Activated CD4-positive, alpha-beta T cell treated with anti-CD3 and anti-CD28 coated beads, Interleukin-2, amount 10 ng/mL, durations not matched to agents 24 days and 14 days (primary cell): ENCODE measurements at regions of chr9 and their contacts with region 1.

Region 1: DNA sequence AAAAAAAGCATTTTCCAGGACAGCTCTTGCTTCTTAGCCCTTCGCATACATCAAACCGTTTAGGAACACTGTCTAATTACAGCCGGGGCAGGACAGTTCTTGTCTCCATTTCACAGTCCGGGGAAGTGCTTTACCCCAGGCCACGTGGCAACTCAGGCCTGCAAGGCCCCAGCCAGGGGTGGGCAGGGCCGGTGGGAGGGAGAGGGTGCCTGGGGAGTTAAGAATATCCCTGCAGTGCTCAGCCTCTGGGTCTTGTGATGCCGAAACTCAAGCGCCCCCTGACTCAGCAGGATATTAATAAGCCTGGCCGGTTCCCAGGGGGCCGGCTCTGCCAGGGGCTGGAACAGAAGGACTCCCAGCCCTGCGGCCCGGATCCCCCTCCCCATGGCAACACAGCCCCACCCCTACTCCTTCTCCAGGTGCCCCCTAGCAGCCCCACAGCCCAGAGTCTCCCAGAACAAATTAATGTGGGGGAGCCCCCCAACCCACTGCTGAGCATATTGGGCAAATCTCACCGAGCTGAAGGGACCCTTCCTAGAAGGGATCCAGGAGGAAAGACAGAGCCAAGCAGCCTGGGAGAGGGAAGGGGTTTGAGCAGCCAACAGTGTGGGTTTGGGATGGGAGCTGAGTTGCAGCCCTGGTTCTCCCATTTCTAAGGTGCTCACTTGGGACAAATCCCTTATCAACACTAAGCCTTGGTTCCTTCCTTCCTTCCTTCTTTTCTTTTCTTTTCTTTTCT is 45.3 kb downstream of the PLPP7 start:
- DNase-seq: no peak
- H3K4me3 Mint-ChIP-seq: no peak overlapping the region
- H3K27ac Mint-ChIP-seq: no peak overlapping the region
- H3K4me1 Mint-ChIP-seq: peaks cover 6% of the 10 kb centered on the region
- H3K27me3 Mint-ChIP-seq: peaks cover 1% of the 10 kb centered on the region

Region 2: GRCh38 chr9:131037335-131038255 is 297.2 kb before region 1 on chr9:
- intact Hi-C with region 1: no loop called
- DNase-seq: no peak
- H3K4me3 Mint-ChIP-seq: no peak overlapping the region
- H3K27ac Mint-ChIP-seq: no peak overlapping the region
- H3K4me1 Mint-ChIP-seq: no peaks in the 10 kb centered on the region
- H3K27me3 Mint-ChIP-seq: no peaks in the 10 kb centered on the region

Region 3: DNA sequence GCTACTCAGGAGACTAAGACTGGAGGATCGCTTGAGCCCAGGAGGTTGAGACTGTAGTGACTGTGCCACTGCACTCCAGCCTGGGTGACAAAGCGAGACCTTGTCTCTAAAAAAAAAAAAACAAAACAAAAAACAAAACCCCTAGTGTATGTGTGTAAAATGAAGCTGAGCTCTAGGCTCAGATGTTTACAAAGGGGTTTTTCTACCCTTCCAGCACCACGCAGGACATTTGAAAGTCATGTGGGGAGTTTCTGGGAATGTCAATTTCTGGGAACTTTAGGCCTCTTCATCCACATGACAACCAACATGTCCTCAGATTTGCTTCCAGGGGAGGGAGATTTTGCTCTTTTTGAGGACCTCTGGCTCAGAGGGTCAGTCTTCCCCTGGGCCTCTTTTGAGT is 280.9 kb before region 1 on chr9:
- intact Hi-C with region 1: loop called (anchors 1 kb)
- DNase-seq: no peak
- H3K4me3 Mint-ChIP-seq: no peak overlapping the region
- H3K27ac Mint-ChIP-seq: no peak overlapping the region
- H3K4me1 Mint-ChIP-seq: no peaks in the 10 kb centered on the region
- H3K27me3 Mint-ChIP-seq: no peaks in the 10 kb centered on the region

Region 4: DNA sequence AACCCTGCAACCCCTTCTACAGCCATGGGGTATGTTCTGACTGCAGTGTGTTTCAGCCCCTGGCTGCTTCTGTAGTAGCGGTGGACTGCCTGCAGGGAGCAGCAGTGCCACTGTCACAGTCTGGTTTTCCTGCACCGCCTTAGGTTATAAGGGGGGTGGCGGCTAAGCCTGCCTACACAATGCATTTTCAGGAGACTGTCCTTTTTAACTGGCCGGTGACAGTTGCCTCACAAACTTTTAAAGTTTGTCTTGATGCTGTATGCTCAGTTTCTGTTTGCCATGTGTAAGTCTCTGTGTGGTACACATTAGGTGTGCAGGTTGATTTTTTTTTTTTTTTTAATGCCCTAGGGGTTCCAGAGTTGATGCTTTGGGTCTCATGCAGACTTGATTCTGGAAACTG is 156.4 kb before region 1 on chr9:
- intact Hi-C with region 1: loop called (anchors 1 kb)
- DNase-seq: peak; percentile 94
- H3K4me3 Mint-ChIP-seq: no peak overlapping the region
- H3K27ac Mint-ChIP-seq: peak overlapping the region; percentile 36
- H3K4me1 Mint-ChIP-seq: peaks cover 9% of the 10 kb centered on the region
- H3K27me3 Mint-ChIP-seq: no peaks in the 10 kb centered on the region

Region 5: DNA sequence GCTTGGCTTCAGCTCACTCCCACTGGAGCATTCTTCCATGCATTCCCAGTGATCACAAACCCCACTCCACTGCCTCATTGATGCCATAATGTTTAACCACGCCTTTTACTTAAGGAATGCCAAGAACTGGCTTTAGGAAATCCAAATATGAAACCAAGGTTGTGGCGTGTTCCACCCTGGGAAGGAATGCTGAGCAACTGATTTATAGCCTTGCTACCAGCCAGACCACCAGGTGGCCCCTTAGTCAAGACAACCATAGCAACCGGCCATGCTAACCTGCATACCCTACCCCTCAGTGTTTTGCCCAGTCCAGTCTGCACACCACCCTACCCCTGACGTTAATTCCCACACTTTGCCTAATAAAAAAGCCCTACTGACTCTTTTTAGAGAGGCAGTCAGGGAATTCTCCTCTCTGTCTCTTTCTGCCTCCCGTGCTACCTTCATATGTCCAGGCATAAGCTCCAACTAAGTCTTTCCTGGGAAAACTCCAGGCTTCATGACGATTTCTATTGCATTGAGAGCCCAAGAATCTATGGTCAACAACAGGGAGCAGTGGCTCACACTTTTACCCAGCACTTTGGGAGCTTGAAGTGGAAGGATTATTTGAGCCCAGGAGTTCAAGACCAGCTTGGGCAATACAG is 32.1 kb after region 1 on chr9:
- intact Hi-C with region 1: no loop called
- DNase-seq: no peak
- H3K4me3 Mint-ChIP-seq: no peak overlapping the region
- H3K27ac Mint-ChIP-seq: no peak overlapping the region
- H3K4me1 Mint-ChIP-seq: peaks cover 4% of the 10 kb centered on the region
- H3K27me3 Mint-ChIP-seq: peaks cover 3% of the 10 kb centered on the region